Activated CD4-positive, alpha-beta memory T cell treated with anti-CD3 and anti-CD28 coated beads for 36 hours (primary cell): ENCODE measurements at regions of chr5 and their contacts with region 1.

Region 1: GRCh38 chr5:138213161-138214029 is at the start of gene CDC23:
- DNase-seq: peak; percentile 94
- H3K4me3 Mint-ChIP-seq: peak within 1 kb of the TSS; percentile 100
- H3K27ac Mint-ChIP-seq: peak within 1 kb of the TSS; percentile 89
- H3K4me1 Mint-ChIP-seq: peaks cover 20% of the 10 kb centered on the region
- H3K27me3 Mint-ChIP-seq: no peaks in the 10 kb centered on the region
- total RNA-seq, gene CDC23: 32.4 to 33.4 TPM

Region 2: DNA sequence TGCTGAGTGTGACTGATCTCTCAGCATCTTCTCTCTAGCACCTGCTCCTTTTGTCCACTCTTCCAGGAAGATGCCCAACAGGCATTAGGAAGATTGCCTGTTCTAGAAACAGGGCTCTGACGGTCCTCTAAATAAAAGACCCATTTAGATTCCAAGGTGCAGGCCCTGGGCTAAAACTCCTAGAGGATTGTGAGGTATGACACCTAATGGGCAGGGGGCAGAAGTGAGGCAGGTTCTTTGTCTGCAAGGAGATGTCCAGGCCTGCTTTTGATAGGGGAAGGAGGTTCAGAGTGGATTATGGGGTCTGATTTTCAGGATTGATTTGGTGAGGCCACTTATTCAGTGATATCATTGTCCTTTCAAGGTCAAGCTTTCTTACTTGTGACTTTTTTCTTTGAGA is 1707.3 kb before region 1 on chr5:
- CTCF ChIA-PET with region 1: no interaction called
- POLR2A ChIA-PET with region 1: no interaction called
- intact Hi-C with region 1: no loop called
- DNase-seq: no peak
- H3K4me3 Mint-ChIP-seq: no peak overlapping the region
- H3K27ac Mint-ChIP-seq: no peak overlapping the region
- H3K4me1 Mint-ChIP-seq: no peaks in the 10 kb centered on the region
- H3K27me3 Mint-ChIP-seq: no peaks in the 10 kb centered on the region

Region 3: DNA sequence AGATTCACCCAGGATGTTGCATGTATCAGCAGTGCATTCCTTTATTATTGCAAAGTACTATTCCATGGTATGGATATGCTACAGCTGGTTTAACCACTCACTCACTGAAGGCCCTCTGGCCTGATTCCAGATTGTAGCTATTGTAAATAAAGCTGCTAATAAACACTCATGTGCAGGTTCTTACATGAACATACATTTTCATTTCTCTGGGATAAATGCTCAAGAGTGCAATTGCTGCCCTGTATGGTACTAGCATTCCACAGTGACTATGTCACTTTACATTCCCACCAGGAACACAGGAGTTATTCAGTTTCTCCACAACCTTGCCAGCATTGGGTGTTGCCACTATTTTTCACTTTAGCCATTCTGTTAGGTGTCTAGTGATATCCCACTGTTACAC is 981.9 kb before region 1 on chr5:
- CTCF ChIA-PET with region 1: no interaction called
- POLR2A ChIA-PET with region 1: no interaction called
- intact Hi-C with region 1: no loop called
- DNase-seq: no peak
- H3K4me3 Mint-ChIP-seq: no peak overlapping the region
- H3K27ac Mint-ChIP-seq: no peak overlapping the region
- H3K4me1 Mint-ChIP-seq: no peaks in the 10 kb centered on the region
- H3K27me3 Mint-ChIP-seq: peaks cover 2% of the 10 kb centered on the region

Region 4: DNA sequence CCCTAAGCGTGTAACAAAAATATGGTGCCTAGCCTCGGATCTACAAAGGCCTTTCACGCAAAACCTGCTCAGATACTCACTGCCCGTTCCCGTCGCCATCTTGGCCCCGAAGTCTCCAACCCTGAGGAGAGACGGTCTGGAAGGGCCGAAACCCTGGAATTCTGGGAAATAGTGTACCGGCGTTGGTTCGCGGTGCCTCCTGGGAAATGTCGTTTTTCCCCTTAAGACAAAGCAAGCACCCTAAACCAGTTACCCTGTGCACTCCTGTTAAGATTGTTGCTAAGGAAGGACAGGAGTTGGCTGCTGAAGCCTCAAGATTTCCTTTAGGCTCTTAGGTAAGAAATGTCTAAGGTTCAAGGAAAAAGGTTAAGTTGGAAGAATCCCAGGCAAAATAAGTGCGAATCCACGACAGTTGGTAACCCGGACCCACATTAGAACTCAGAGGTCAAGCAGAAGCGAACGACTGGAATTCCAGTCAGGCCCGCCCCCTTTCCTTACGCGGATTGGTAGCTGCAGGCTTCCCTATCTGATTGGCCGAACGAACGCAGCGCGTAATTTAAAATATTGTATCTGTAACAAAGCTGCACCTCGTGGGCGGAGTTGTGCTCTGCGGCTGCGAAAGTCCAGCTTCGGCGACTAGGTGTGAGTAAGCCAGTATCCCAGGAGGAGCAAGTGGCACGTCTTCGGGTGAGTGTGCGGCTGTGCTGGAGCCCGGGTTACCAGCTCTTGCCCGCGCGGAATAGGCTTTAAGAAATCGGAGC is 34.7 kb before region 1 on chr5 and contains the starts of genes BRD8 and KIF20A:
- CTCF ChIA-PET with region 1: interaction called, 3 read pairs
- POLR2A ChIA-PET with region 1: interaction called, 5 read pairs
- intact Hi-C with region 1: loop called (anchors 1 kb)
- DNase-seq: peak; percentile 96
- H3K4me3 Mint-ChIP-seq: no peak within 1 kb of the TSS
- H3K27ac Mint-ChIP-seq: no peak within 1 kb of the TSS
- H3K4me1 Mint-ChIP-seq: peaks cover 17% of the 10 kb centered on the region
- H3K27me3 Mint-ChIP-seq: no peaks in the 10 kb centered on the region
- total RNA-seq, gene BRD8: 62.9 to 65.8 TPM
- total RNA-seq, gene KIF20A: 55.5 to 60.3 TPM

Region 5: DNA sequence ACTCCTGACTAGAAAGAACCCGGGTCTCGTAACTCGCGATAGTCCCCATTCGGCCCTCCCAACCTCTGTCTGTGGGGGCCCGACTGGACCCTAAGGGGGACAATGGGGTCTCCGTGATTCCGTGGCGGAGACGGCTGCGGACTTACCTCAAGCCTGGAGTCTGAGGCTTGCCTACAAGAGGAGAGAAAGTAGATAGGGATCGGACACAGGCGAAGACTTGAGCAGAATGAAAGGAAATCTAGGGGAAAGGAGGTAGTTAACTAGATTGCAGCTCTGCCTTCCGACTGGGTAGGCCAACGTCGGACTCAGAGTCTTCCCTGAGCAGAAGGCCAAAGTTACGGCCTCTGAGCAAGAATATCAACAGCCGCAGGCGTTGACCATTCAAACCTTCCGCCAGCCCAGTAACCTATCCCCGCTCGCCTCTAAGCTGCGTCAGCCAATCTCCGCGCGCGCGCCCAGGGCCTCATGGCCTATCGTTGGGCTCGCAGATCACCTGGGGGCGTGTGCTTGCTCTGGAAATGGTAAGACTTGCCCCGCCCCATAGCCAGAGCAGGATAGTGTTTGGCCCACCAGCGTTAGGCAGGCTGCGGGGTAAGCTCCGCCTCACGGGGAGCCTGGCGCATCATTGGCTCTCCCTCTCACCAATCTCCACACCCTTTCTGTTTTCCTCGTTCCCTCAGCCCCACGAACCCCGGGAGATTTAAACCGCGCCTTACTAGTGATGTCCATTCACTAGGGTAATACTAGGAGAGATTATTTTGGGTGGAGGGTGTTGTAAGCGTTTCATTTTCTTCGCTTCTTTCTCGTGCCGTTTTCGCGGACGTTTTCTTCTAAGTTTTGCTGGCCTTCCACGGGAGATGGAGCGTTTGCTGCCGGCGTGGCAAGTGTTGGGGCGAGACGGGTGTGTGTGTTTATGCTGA is 118.3 kb after region 1 on chr5 and contains the start of gene CDC25C:
- CTCF ChIA-PET with region 1: no interaction called
- POLR2A ChIA-PET with region 1: interaction called, 5 read pairs
- intact Hi-C with region 1: loop called (anchors 1 kb)
- DNase-seq: peak; percentile 98
- H3K4me3 Mint-ChIP-seq: peak within 1 kb of the TSS; percentile 83
- H3K27ac Mint-ChIP-seq: peak within 1 kb of the TSS; percentile 81
- H3K4me1 Mint-ChIP-seq: peaks cover 23% of the 10 kb centered on the region
- H3K27me3 Mint-ChIP-seq: no peaks in the 10 kb centered on the region
- total RNA-seq, gene CDC25C: 19.1 to 19.2 TPM

Region 6: GRCh38 chr5:138344960-138345622 is 131.7 kb after region 1 on chr5:
- CTCF ChIA-PET with region 1: no interaction called
- POLR2A ChIA-PET with region 1: no interaction called
- intact Hi-C with region 1: no loop called
- DNase-seq: no peak
- H3K4me3 Mint-ChIP-seq: no peak overlapping the region
- H3K27ac Mint-ChIP-seq: no peak overlapping the region
- H3K4me1 Mint-ChIP-seq: peaks cover 10% of the 10 kb centered on the region
- H3K27me3 Mint-ChIP-seq: no peaks in the 10 kb centered on the region

Region 7: GRCh38 chr5:138438724-138439476 is 225.5 kb after region 1 on chr5 and contains the start of gene REEP2:
- CTCF ChIA-PET with region 1: no interaction called
- POLR2A ChIA-PET with region 1: no interaction called
- intact Hi-C with region 1: loop called (anchors 10 kb)
- DNase-seq: peak; percentile 80
- H3K4me3 Mint-ChIP-seq: peak within 1 kb of the TSS; percentile 78
- H3K27ac Mint-ChIP-seq: peak within 1 kb of the TSS; percentile 60
- H3K4me1 Mint-ChIP-seq: peaks cover 16% of the 10 kb centered on the region
- H3K27me3 Mint-ChIP-seq: peaks cover 3% of the 10 kb centered on the region
- total RNA-seq, gene REEP2: 6.1 to 10.9 TPM